ENCODE measurements at regions of chr3 and their contacts with region 1.

Region 1: DNA sequence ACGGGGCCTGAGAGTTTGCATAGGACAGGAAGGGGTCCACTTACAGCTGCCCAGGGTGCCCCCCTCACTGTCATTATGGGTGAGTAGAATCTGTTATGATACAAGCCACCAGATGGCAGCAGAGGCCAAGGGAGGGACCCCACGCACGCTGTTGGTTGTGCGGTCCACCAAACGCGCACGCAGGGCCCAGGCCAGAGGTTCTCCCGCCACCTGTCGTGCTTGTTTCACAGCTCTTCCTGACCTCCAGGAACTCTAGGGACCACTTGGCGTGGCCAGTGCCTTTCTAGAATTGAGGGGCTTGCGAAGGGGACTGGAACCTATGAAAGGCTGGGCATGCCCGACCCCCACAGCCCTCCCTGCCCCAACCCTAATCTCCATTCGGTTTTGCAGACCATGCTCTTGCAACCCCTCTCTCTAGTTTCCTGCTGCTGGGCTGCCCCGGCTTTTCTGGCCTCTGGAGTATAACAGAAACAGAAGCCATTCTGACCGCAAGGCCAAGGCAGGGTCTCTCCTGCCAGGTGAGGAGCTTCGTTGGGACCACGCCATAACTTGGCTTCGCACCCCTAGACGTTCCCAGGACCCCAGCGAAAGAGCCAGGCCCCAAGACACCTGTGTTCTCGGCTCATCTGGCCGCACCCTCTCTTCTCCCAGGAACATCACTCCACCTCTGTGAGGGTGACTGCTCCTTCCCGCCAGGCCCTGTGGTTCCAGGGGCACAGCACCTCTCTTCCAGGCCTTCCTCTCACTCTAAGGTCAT is 46.0 kb downstream of the ALDH1L1 start:
- DNase-seq: peak in 1 of 2 experiments; percentile 87
- H3K4me3 ChIP-seq: no peak overlapping the region
- H3K27ac ChIP-seq: no peak overlapping the region
- H3K4me1 ChIP-seq: peaks cover 0 to 21% (median 8%) of the 10 kb centered on the region in 4 experiments; a peak in 6 of 7 replicates
- H3K27me3 ChIP-seq: peaks cover 0 to 3% (median 1%) of the 10 kb centered on the region in 4 experiments; a peak in 5 of 7 replicates
- CTCF ChIP-seq: peak in 2 of 3 experiments; percentile 76 to 80; a peak in 3 of 4 replicates
- EP300 ChIP-seq: no peak
- POLR2A ChIP-seq: no peak
- RAD21 ChIP-seq: peak; percentile 95 to 97

Region 2: DNA sequence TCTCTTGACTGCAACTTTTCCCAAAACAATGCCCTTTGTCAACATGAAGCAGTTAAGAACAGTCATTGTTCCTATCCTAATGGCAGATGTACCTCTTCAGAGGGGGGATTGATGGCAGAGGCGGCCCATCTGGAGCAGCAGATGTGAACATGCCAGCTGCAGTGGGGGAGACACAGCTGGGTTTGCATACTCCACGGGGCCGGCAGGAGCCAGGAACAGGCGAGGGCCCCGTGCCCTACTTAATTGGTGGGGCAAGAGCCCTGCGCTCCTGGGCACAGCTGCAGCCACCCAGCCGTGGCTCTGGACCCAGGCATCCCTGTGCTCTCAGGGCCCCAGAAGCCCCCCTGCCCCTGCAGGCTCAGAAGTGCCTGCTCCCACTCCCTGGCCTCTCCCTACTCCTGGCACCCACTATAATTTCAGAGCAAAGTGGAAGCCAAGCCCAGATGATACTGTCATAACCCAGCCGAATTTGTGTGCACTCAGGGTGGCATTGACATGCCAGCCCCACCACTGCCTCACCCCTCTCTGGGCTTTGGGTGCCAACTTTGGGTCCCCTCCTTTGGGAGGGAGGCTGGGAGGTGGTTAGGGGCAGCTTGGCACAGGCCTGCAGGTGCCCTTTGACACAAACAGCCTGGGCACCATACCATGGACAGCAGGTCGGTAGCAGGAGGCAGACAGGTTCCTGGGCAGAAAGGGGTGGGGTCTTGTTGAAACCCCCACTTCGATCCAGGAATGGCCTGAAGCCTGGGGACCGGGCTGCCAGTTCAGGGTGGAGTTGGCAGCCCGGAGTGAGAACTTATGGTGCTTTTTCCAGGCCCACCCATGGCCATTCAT is 130.7 kb before region 1 on chr3:
- CTCF ChIA-PET with region 1: no interaction called
- POLR2A ChIA-PET with region 1: no interaction called
- DNase-seq: no peak
- H3K4me3 ChIP-seq: no peak overlapping the region
- H3K27ac ChIP-seq: no peak overlapping the region
- H3K4me1 ChIP-seq: no peaks in the 10 kb centered on the region
- H3K27me3 ChIP-seq: no peaks in the 10 kb centered on the region
- CTCF ChIP-seq: no peak
- EP300 ChIP-seq: no peak
- POLR2A ChIP-seq: no peak
- RAD21 ChIP-seq: no peak

Region 3: DNA sequence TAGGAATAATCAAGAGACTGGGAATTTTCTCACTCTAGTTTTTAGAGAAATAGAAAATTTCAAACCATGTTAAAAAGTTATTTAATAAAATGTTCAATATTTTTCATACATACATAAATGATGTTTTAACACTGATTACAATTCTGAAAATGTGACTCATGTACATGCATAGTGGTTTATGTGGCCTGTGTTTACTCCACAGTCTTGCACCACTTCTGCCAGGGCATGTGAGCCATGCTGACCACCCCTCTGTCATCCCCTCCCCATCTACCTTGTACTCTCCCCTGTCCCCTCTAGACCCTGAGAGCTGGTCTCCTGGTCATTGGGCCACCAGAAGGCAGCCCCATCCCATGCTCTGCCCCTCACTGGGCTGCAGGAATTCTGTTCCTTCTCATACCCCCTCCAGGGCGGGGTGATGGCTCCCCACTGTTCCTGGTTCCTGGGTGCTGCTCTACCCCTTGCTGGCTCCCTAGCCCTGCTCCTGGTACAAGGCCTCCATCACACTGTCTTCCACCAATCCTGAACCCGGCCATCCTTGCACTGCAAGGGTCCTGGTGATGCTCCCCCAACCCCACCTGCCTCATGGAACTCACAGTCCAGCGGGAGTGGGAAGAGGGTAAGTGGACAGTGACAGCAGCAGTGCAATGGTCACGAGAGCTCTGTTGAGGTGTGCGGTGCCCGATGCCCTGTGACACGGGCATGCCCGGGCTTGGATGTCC is 26.3 kb before region 1 on chr3:
- CTCF ChIA-PET with region 1: interaction called, 52 read pairs
- POLR2A ChIA-PET with region 1: no interaction called
- DNase-seq: peak in 1 of 2 experiments; percentile 22
- H3K4me3 ChIP-seq: no peak overlapping the region
- H3K27ac ChIP-seq: no peak overlapping the region
- H3K4me1 ChIP-seq: no peaks in the 10 kb centered on the region; a peak in 1 of 7 replicates
- H3K27me3 ChIP-seq: 0 out of 7 replicates have a peak, but pooled peaks cover 0 to 2% (median 0%) of the 10 kb centered on the region in 4 experiments
- CTCF ChIP-seq: no peak
- EP300 ChIP-seq: no peak
- POLR2A ChIP-seq: no peak
- RAD21 ChIP-seq: no peak

Region 4: GRCh38 chr3:126124148-126124868 is 10.1 kb before region 1 on chr3:
- CTCF ChIA-PET with region 1: interaction called, 36 read pairs
- POLR2A ChIA-PET with region 1: interaction called, 4 read pairs
- DNase-seq: peak in 1 of 2 experiments; percentile 69
- H3K4me3 ChIP-seq: 0 out of 8 replicates have a peak overlapping the region, but pooled peaks of 1 of the 4 experiments have one; percentile 15
- H3K27ac ChIP-seq: no peak overlapping the region
- H3K4me1 ChIP-seq: peaks cover 0 to 11% (median 6%) of the 10 kb centered on the region in 4 experiments; a peak in 5 of 7 replicates
- H3K27me3 ChIP-seq: no peaks in the 10 kb centered on the region
- CTCF ChIP-seq: peak in 1 of 3 experiments; percentile 10; a peak in 1 of 4 replicates
- EP300 ChIP-seq: no peak
- POLR2A ChIP-seq: no peak
- RAD21 ChIP-seq: no peak; a peak in 1 of 4 replicates

Region 5: GRCh38 chr3:126170073-126170777 is 35.8 kb after region 1 on chr3:
- CTCF ChIA-PET with region 1: interaction called, 16 read pairs
- POLR2A ChIA-PET with region 1: no interaction called
- DNase-seq: no peak
- H3K4me3 ChIP-seq: no peak overlapping the region
- H3K27ac ChIP-seq: no peak overlapping the region
- H3K4me1 ChIP-seq: peaks cover 0 to 5% (median under 1%) of the 10 kb centered on the region in 4 experiments; a peak in 2 of 7 replicates
- H3K27me3 ChIP-seq: no peaks in the 10 kb centered on the region
- CTCF ChIP-seq: no peak
- EP300 ChIP-seq: no peak
- POLR2A ChIP-seq: no peak
- RAD21 ChIP-seq: no peak

Region 6: GRCh38 chr3:126226374-126226773 is 92.0 kb after region 1 on chr3:
- CTCF ChIA-PET with region 1: interaction called, 28 read pairs
- POLR2A ChIA-PET with region 1: no interaction called
- DNase-seq: no peak
- H3K4me3 ChIP-seq: no peak overlapping the region
- H3K27ac ChIP-seq: no peak overlapping the region
- H3K4me1 ChIP-seq: no peaks in the 10 kb centered on the region
- H3K27me3 ChIP-seq: no peaks in the 10 kb centered on the region
- CTCF ChIP-seq: no peak
- EP300 ChIP-seq: no peak
- POLR2A ChIP-seq: no peak
- RAD21 ChIP-seq: no peak

Region 7: DNA sequence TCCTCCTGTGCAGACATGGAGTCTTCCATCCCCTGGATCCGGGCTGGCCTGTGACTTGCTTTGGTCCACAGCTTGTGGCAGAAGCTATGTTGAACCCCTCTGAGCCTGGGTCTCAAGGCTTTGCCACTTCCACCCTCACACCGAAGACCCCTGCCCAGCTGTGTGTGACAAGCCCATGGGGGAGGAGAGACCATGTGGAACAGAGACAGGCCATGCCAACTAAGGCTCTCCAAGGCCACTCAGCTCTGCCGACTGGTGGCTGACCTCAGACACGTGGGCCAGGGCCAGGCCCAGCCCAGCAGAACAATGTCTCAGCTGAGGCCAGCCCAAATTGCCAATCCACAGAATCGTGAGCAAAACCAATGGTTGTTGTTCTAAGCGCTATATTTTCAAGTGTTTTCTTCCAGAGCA is 243.9 kb after region 1 on chr3:
- CTCF ChIA-PET with region 1: interaction called, 16 read pairs
- POLR2A ChIA-PET with region 1: no interaction called
- DNase-seq: no peak
- H3K4me3 ChIP-seq: no peak overlapping the region
- H3K27ac ChIP-seq: no peak overlapping the region
- H3K4me1 ChIP-seq: peaks cover 0 to 7% (median 3%) of the 10 kb centered on the region in 4 experiments; a peak in 4 of 7 replicates
- H3K27me3 ChIP-seq: no peaks in the 10 kb centered on the region
- CTCF ChIP-seq: no peak
- EP300 ChIP-seq: no peak
- POLR2A ChIP-seq: no peak
- RAD21 ChIP-seq: no peak

Region 8: DNA sequence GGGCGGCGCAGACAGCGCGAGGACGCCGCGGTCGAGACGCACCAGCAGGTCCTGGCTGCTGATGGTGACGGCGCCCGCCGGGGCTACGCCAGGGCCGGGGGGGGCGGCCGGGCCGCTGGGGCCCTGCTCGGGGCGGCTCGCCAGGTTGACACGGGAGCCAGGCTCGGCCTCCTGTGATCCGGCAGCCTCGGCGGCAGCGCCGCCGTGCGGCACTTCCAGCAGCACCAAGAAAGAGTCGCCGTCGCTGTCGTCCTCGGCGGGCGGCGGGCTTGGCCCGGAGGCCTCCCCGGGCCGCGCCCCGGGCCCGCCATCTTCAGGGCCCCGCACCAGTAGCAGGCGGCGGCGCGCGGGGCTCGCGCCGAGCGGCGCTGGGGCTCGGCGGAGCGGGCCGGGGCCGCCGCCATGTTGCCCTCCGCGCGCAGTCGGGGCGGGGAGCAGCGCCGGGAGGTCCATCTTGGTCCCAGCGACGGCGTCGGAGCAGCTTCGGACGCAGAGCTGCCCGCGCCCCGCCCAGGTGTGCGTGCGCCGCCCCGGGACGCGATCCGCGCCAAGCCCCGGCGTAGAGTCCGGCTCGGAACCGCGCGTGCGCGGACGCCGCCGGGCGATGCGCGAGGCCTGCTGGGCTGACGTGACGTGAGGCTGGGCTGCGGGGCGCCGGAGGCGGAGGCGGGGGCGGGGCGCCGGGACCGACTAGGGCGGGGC is 341.2 kb after region 1 on chr3 and contains the start of gene ZXDC:
- CTCF ChIA-PET with region 1: interaction called, 15 read pairs
- POLR2A ChIA-PET with region 1: interaction called, 3 read pairs
- DNase-seq: peak; percentile 81 to 94
- H3K4me3 ChIP-seq: peak within 1 kb of the TSS; percentile 73 to 80 (median 74)
- H3K27ac ChIP-seq: peak within 1 kb of the TSS; percentile 80
- H3K4me1 ChIP-seq: peaks cover 9 to 22% (median 14%) of the 10 kb centered on the region in 4 experiments; a peak in 6 of 7 replicates
- H3K27me3 ChIP-seq: no peaks in the 10 kb centered on the region
- CTCF ChIP-seq: peak in 2 of 3 experiments; percentile 49; a peak in 3 of 4 replicates
- EP300 ChIP-seq: no peak
- POLR2A ChIP-seq: peak in 1 of 2 experiments; percentile 78; a peak in 1 of 3 replicates
- RAD21 ChIP-seq: peak; percentile 13 to 48; a peak in 3 of 4 replicates
- total RNA-seq, gene ZXDC: 23.0 and 24.3 TPM in 2 replicates

Measured in H1 (cell line).